Caco-2 (cell line): ENCODE measurements at regions of chr22 and their contacts with region 1.

Region 1: GRCh38 chr22:22810018-22810427 is 77.6 kb upstream of the IGLL5 start:
- DNase-seq: peak; percentile 65 to 79
- H3K4me3 ChIP-seq: no peak overlapping the region
- H3K4me3 Mint-ChIP-seq: no peak overlapping the region
- H3K27ac Mint-ChIP-seq: no peak overlapping the region
- H3K4me1 ChIP-seq: no peaks in the 10 kb centered on the region
- H3K4me1 Mint-ChIP-seq: peaks cover 6% of the 10 kb centered on the region
- H3K27me3 ChIP-seq: no peaks in the 10 kb centered on the region
- H3K27me3 Mint-ChIP-seq: peaks cover 3% of the 10 kb centered on the region
- CTCF ChIP-seq: peak; percentile 83 to 88

Region 2: DNA sequence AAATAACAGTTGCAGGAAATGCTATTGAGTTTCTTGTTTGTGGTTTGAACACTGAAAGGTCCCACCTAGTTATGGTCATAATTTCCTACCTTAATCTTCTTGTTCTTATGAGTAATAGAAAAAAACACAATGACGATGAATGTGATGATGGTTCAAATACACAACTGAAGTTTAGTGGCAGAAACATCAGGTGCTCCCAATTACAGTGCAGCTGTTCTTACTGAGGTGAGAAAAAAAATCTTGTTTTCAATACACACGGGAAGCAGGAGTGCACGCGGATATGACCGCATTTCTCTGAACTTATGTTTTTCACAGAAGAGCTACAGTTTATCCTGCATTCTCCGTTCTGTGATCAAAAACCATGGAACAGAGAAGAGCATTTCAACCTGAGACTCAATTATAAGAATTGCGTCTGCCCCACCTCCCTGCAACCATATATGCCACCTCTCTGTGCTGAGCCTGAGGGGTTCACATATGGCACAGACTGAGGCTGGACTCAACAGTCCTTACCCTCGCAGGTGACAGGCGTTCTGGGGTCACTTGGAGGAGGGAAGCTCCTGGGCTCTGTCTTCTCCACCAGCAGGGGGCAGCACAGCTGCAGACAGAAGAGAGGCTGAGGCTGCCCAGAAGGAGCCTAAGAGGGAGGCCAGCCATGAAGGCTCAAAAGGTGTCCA is 22.1 kb before region 1 on chr22:
- CTCF ChIA-PET with region 1: interaction called, 20 read pairs
- POLR2A ChIA-PET with region 1: no interaction called
- intact Hi-C with region 1: no loop called
- DNase-seq: peak in 1 of 2 experiments; percentile 64
- H3K4me3 ChIP-seq: no peak overlapping the region
- H3K4me3 Mint-ChIP-seq: no peak overlapping the region
- H3K27ac Mint-ChIP-seq: no peak overlapping the region
- H3K4me1 ChIP-seq: peaks cover 51% of the 10 kb centered on the region
- H3K4me1 Mint-ChIP-seq: peaks cover 12% of the 10 kb centered on the region
- H3K27me3 ChIP-seq: no peaks in the 10 kb centered on the region
- H3K27me3 Mint-ChIP-seq: no peaks in the 10 kb centered on the region
- CTCF ChIP-seq: peak; percentile 64 to 84

Region 3: GRCh38 chr22:22825213-22825593 is 15.2 kb after region 1 on chr22:
- CTCF ChIA-PET with region 1: no interaction called
- POLR2A ChIA-PET with region 1: no interaction called
- intact Hi-C with region 1: loop called (anchors 2 kb)
- DNase-seq: no peak
- H3K4me3 ChIP-seq: no peak overlapping the region
- H3K4me3 Mint-ChIP-seq: no peak overlapping the region
- H3K27ac Mint-ChIP-seq: no peak overlapping the region
- H3K4me1 ChIP-seq: peaks cover 20% of the 10 kb centered on the region
- H3K4me1 Mint-ChIP-seq: peaks cover 18% of the 10 kb centered on the region
- H3K27me3 ChIP-seq: no peaks in the 10 kb centered on the region
- H3K27me3 Mint-ChIP-seq: no peaks in the 10 kb centered on the region
- CTCF ChIP-seq: no peak

Region 4: GRCh38 chr22:22836635-22837034 is 26.6 kb after region 1 on chr22:
- CTCF ChIA-PET with region 1: no interaction called
- POLR2A ChIA-PET with region 1: no interaction called
- intact Hi-C with region 1: no loop called
- DNase-seq: no peak
- H3K4me3 ChIP-seq: no peak overlapping the region
- H3K4me3 Mint-ChIP-seq: no peak overlapping the region
- H3K27ac Mint-ChIP-seq: peak overlapping the region; percentile 64
- H3K4me1 ChIP-seq: no peaks in the 10 kb centered on the region
- H3K4me1 Mint-ChIP-seq: peaks cover 7% of the 10 kb centered on the region
- H3K27me3 ChIP-seq: no peaks in the 10 kb centered on the region
- H3K27me3 Mint-ChIP-seq: peaks cover 2% of the 10 kb centered on the region
- CTCF ChIP-seq: no peak